IMR-90 (cell line): ENCODE measurements at regions of chr21 and their contacts with region 1.

Region 1: DNA sequence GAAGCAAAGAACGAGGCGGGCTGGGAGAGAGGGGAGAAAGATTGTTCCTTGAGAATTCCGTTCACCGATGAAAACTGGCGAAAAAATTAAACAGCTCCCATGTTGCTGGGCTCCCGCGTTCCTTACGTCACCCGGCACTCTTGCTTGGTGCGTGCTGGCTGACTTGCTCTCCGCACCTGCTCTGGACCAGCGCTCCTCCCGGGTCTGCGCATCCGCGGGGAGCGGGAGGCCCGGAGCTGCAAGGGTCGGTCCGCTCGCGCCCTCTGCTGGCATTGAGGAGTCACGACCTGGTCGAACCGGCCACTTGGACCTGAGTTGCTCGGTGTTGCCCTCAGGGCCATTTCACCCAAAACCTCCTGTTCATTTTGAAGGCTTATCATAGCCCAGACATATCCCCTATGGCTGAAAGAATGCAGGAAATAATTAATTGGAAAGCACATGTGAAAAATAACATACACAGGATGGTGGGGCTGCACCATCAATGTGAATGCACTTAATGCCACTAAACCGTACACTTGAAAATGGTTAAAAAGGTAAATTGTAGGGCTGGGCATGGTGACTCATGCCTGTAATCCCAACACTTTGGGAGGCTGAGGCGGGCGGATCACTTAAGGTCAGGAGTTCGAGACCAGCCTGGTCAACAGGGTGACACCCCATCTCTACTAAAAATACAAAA is 98.9 kb upstream of the BACE2 start:
- DNase-seq: peak; percentile 23
- ATAC-seq: peak; percentile 85
- H3K4me3 ChIP-seq: no peak overlapping the region
- H3K27ac ChIP-seq: no peak overlapping the region
- H3K4me1 ChIP-seq: no peaks in the 10 kb centered on the region
- H3K27me3 ChIP-seq: no peaks in the 10 kb centered on the region
- CTCF ChIP-seq: peak; percentile 54
- POLR2A ChIP-seq: no peak
- RAD21 ChIP-seq: peak; percentile 59

Region 2: DNA sequence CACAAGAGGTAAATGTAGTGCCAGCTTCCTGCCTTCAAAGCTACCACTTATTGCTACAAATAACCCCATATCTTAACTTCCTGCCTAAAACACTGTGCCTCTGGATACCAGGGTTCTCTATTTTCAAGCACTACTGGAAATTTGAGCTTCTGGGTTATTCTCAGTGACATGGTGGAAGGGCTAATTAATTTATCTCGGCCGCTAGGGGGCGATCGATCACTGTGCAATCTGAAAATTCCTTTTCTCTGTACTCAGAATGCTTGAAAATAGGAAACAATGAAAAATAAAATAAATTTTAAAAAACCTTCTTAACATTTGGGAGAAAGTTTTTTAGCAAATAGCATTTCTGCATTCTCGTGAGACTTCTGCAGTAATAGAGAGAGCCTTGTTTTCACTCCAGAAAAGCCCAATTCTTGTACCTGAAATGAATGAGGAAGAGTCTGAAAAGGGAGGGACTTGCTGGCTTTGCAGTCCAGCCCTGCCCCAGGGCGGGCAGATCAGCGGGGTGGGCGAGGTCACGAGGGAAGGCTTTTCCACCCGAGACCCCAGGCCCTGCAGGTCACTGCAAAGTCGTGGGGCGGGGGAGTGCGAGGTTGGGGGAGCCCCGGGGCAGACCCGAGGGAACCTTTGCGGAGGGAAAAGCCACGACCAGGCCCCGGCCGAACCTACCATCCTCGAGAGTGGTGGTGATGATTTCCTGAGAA is 925.1 kb before region 1 on chr21:
- CTCF ChIA-PET with region 1: no interaction called
- POLR2A ChIA-PET with region 1: no interaction called
- dilution Hi-C with region 1: no loop called
- in situ Hi-C with region 1: no loop called
- intact Hi-C with region 1: loop called (anchors 5 kb)
- DNase-seq: peak; percentile 18
- ATAC-seq: peak; percentile 63; the same call in 1 of the 2 replicates
- H3K4me3 ChIP-seq: no peak overlapping the region
- H3K27ac ChIP-seq: no peak overlapping the region
- H3K4me1 ChIP-seq: no peaks in the 10 kb centered on the region
- H3K27me3 ChIP-seq: no peaks in the 10 kb centered on the region
- CTCF ChIP-seq: peak; percentile 63
- POLR2A ChIP-seq: no peak
- RAD21 ChIP-seq: peak; percentile 60

Region 3: GRCh38 chr21:41564871-41565274 is 495.8 kb after region 1 on chr21:
- CTCF ChIA-PET with region 1: no interaction called
- POLR2A ChIA-PET with region 1: no interaction called
- dilution Hi-C with region 1: no loop called
- in situ Hi-C with region 1: no loop called
- intact Hi-C with region 1: no loop called
- DNase-seq: no peak
- ATAC-seq: no peak
- H3K4me3 ChIP-seq: no peak overlapping the region
- H3K27ac ChIP-seq: no peak overlapping the region
- H3K4me1 ChIP-seq: no peaks in the 10 kb centered on the region
- H3K27me3 ChIP-seq: peaks cover 6% of the 10 kb centered on the region
- CTCF ChIP-seq: no peak
- POLR2A ChIP-seq: no peak
- RAD21 ChIP-seq: no peak